ENCODE measurements at regions of chr3 and their contacts with region 1.

Region 1: GRCh38 chr3:69120879-69121464 is 1.4 kb downstream of the LMOD3 start:
- DNase-seq: peak; percentile 70 to 91
- H3K4me3 ChIP-seq: no peak overlapping the region
- H3K27ac ChIP-seq: no peak overlapping the region
- H3K4me1 ChIP-seq: no peaks in the 10 kb centered on the region
- H3K27me3 ChIP-seq: no peaks in the 10 kb centered on the region
- CTCF ChIP-seq: peak in 2 of 3 experiments; percentile 81 to 95; a peak in 3 of 4 replicates
- EP300 ChIP-seq: no peak
- POLR2A ChIP-seq: no peak
- RAD21 ChIP-seq: peak; percentile 91 to 92

Region 2: GRCh38 chr3:69104996-69105719 is 15.8 kb before region 1 on chr3:
- CTCF ChIA-PET with region 1: interaction called, 15 read pairs
- POLR2A ChIA-PET with region 1: no interaction called
- DNase-seq: no peak
- H3K4me3 ChIP-seq: no peak overlapping the region
- H3K27ac ChIP-seq: no peak overlapping the region
- H3K4me1 ChIP-seq: no peaks in the 10 kb centered on the region
- H3K27me3 ChIP-seq: no peaks in the 10 kb centered on the region
- CTCF ChIP-seq: no peak
- EP300 ChIP-seq: no peak
- POLR2A ChIP-seq: no peak
- RAD21 ChIP-seq: no peak

Region 3: GRCh38 chr3:69313251-69313650 is 192.3 kb after region 1 on chr3:
- CTCF ChIA-PET with region 1: interaction called, 59 read pairs
- POLR2A ChIA-PET with region 1: no interaction called
- DNase-seq: no peak
- H3K4me3 ChIP-seq: no peak overlapping the region
- H3K27ac ChIP-seq: no peak overlapping the region
- H3K4me1 ChIP-seq: no peaks in the 10 kb centered on the region
- H3K27me3 ChIP-seq: no peaks in the 10 kb centered on the region; a peak in 1 of 7 replicates
- CTCF ChIP-seq: no peak
- EP300 ChIP-seq: no peak
- POLR2A ChIP-seq: no peak
- RAD21 ChIP-seq: no peak

Region 4: GRCh38 chr3:69425261-69425660 is 304.3 kb after region 1 on chr3:
- CTCF ChIA-PET with region 1: interaction called, 12 read pairs
- POLR2A ChIA-PET with region 1: no interaction called
- DNase-seq: no peak
- H3K4me3 ChIP-seq: no peak overlapping the region
- H3K27ac ChIP-seq: no peak overlapping the region
- H3K4me1 ChIP-seq: no peaks in the 10 kb centered on the region; a peak in 1 of 7 replicates
- H3K27me3 ChIP-seq: no peaks in the 10 kb centered on the region
- CTCF ChIP-seq: peak in 2 of 3 experiments; percentile 79 to 85; a peak in 3 of 4 replicates
- EP300 ChIP-seq: no peak
- POLR2A ChIP-seq: no peak
- RAD21 ChIP-seq: peak; percentile 83 to 89